ENCODE measurements at regions of chr16 and their contacts with region 1.

Region 1: GRCh38 chr16:30355144-30355894 is at the start of gene CD2BP2:
- DNase-seq: peak; percentile 97
- H3K4me3 Mint-ChIP-seq: peak within 1 kb of the TSS; percentile 94
- H3K27ac Mint-ChIP-seq: peak within 1 kb of the TSS; percentile 96
- H3K4me1 Mint-ChIP-seq: peaks cover 48% of the 10 kb centered on the region
- H3K27me3 Mint-ChIP-seq: no peaks in the 10 kb centered on the region
- total RNA-seq, gene CD2BP2: 39.2 to 41.4 TPM

Region 2: GRCh38 chr16:30335598-30336474 is 19.5 kb before region 1 on chr16:
- CTCF ChIA-PET with region 1: no interaction called
- intact Hi-C with region 1: loop called (anchors 1 kb)
- DNase-seq: peak; percentile 63
- H3K4me3 Mint-ChIP-seq: peak overlapping the region; percentile 78
- H3K27ac Mint-ChIP-seq: peak overlapping the region; percentile 59
- H3K4me1 Mint-ChIP-seq: peaks cover 26% of the 10 kb centered on the region
- H3K27me3 Mint-ChIP-seq: no peaks in the 10 kb centered on the region

Region 3: DNA sequence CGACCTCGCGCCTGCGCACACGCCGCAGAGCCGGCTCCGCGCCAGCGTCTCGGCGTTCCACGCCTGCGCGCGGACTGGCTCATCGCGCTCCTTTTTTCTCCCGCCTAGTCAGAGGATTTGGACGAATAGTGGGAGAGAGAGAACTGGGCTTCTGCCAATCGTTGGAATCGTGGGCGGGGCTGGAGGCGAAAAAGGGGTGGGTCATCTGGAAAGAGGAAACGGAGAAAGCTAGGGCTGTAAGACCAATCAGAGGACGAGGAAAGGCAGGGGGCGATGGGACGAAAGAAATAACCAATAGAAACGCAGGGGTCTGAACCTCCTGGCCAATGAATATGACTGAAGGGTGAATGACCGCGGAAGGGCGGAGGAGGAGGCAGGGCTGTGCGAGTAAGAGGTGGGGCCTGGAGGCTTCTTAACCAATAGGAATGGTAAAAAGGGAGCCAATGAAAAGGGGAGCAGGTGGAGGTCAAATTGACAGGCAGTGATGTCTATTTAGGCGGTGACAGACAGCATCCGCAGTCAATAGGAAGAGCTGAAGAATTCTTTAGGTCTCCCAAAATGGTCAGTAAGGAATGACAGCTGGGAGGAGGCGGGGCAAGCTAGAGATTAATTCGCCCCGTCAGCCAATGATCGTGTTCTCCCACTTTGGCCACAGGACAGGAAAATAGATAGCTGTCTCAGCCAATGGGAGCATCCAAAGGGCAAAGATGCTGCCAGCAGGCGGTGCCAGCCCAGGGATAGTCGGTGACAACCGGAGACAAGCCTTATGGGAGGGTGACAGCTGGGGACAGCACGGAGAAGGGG is 15.3 kb after region 1 on chr16 and contains the start of gene TBC1D10B:
- CTCF ChIA-PET with region 1: interaction called, 7 read pairs
- intact Hi-C with region 1: loop called (anchors 1 kb)
- DNase-seq: peak; percentile 100
- H3K4me3 Mint-ChIP-seq: peak within 1 kb of the TSS; percentile 94
- H3K27ac Mint-ChIP-seq: peak within 1 kb of the TSS; percentile 98
- H3K4me1 Mint-ChIP-seq: peaks cover 40% of the 10 kb centered on the region
- H3K27me3 Mint-ChIP-seq: no peaks in the 10 kb centered on the region
- total RNA-seq, gene TBC1D10B: 36.6 to 38.4 TPM

Region 4: GRCh38 chr16:30378236-30379204 is 23.2 kb after region 1 on chr16:
- CTCF ChIA-PET with region 1: interaction called, 3 read pairs
- intact Hi-C with region 1: loop called (anchors 2 kb)
- DNase-seq: peak; percentile 100
- H3K4me3 Mint-ChIP-seq: peak overlapping the region; percentile 99
- H3K27ac Mint-ChIP-seq: peak overlapping the region; percentile 99
- H3K4me1 Mint-ChIP-seq: peaks cover 43% of the 10 kb centered on the region
- H3K27me3 Mint-ChIP-seq: no peaks in the 10 kb centered on the region

Region 5: DNA sequence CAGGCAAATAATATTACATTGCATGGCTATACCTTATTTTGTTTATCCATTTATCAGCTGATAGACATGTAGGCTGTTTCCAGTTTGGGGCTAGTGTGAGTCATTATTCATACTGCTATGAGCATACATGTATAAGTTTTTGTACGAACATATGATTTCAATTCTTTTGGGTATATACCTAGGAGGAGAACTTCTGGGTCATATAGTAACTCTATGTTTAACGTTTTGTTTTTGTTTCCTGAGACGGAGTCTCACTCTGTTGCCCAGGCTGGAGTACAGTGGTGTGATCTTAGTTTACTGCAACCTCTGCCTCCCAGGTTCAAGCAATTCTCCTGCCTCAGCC is 114.8 kb after region 1 on chr16:
- CTCF ChIA-PET with region 1: no interaction called
- intact Hi-C with region 1: no loop called
- DNase-seq: no peak
- H3K4me3 Mint-ChIP-seq: peak overlapping the region; percentile 41
- H3K27ac Mint-ChIP-seq: peak overlapping the region; percentile 92
- H3K4me1 Mint-ChIP-seq: peaks cover 67% of the 10 kb centered on the region
- H3K27me3 Mint-ChIP-seq: no peaks in the 10 kb centered on the region

Measured in activated naive CD4-positive, alpha-beta T cell treated with anti-CD3 and anti-CD28 coated beads for 36 hours (primary cell).